WTC11 (cell line): ENCODE measurements at regions of chr4 and their contacts with region 1.

Region 1: GRCh38 chr4:120304801-120305200 is 238.2 kb upstream of the MAD2L1 start:
- DNase-seq: no peak
- ATAC-seq: no peak
- H3K4me3 Mint-ChIP-seq: no peak overlapping the region
- H3K27ac Mint-ChIP-seq: no peak overlapping the region
- H3K4me1 Mint-ChIP-seq: 0 out of 2 replicates have a peak, but pooled peaks cover 9% of the 10 kb centered on the region
- H3K27me3 Mint-ChIP-seq: no peaks in the 10 kb centered on the region
- CTCF ChIP-seq: no peak

Region 2: DNA sequence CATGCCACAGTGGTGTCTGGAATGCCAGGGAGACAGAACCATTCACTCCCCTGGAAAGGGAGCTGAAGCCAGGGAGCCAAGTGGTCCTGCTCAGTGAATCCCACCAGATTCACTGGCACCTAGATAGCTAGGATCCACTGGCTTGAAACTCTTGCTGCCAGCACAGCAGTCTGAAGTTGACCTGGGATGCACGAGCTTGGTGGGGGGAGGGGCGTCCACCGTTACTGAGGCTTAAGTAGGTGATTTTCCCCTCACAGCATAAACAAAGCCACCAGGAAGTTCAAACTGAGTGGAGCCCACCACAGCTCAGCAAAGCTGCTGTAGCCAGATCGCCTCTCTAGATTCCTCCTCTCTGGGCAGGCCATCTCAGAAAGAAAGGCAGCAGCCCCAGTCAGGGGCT is 204.4 kb after region 1 on chr4:
- CTCF ChIA-PET with region 1: no interaction called
- POLR2A ChIA-PET with region 1: interaction called, 11 read pairs
- DNase-seq: no peak
- ATAC-seq: peak; percentile 53
- H3K4me3 Mint-ChIP-seq: no peak overlapping the region
- H3K27ac Mint-ChIP-seq: no peak overlapping the region
- H3K4me1 Mint-ChIP-seq: peaks cover 12% of the 10 kb centered on the region
- H3K27me3 Mint-ChIP-seq: no peaks in the 10 kb centered on the region; the same call in 1 of the 2 replicates
- CTCF ChIP-seq: no peak